Dorsolateral prefrontal cortex (tissue), 120 donors: ENCODE measurements at regions of chr12 and their contacts with region 1.

Region 1: DNA sequence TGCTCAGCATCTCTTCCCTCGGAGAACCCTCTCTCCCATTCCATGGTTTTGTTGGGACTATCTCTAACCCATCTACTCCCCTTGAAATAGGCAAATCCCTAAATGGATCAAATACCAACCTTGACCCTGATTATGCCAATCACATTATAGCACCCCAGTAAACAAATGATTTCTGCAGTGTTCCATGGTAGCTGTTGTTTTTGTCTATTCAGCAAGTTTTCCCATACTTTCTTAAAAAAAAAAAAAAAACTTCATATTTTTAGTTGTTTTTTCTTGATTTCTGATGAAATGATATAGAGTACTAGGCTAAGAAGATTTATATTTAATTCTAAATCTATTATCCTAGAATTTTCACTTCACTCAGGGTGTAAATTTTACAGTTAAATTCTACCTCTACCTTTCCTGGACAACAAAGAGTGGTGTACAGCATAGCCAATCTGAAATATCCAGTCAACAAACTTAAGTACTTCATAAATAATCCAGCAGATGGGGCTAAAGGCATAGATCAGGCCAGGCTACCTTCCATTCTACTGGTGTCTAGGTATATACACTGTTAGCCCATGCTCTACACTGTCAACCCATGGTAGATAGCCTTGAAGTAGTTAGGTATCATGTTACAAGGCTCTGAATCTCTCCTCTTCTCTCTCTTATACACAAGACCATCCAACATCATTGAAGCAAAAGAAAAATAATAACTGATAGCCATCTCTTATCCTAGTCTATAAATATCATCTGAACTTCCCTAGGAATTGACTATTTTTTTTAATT is 82.2 kb downstream of the PLEKHG7 start:
- DNase-seq: peak in 1 of 10 donors; percentile 22
- H3K4me3 ChIP-seq: no peak overlapping the region
- H3K27ac ChIP-seq: peak overlapping the region in 2 of 59 donors; percentile 6 to 7
- H3K27me3 ChIP-seq: no peaks in the 10 kb centered on the region
- CTCF ChIP-seq: peak in 55 of 56 donors; percentile 30 to 78 (median 56)

Region 2: GRCh38 chr12:92356425-92356824 is 428.6 kb before region 1 on chr12:
- intact Hi-C with region 1: no loop called
- DNase-seq: no peak
- H3K4me3 ChIP-seq: no peak overlapping the region
- H3K27ac ChIP-seq: no peak overlapping the region
- H3K27me3 ChIP-seq: no peaks in the 10 kb centered on the region
- CTCF ChIP-seq: no peak

Region 3: GRCh38 chr12:92729773-92730305 is 55.1 kb before region 1 on chr12:
- intact Hi-C with region 1: no loop called
- DNase-seq: no peak
- H3K4me3 ChIP-seq: no peak overlapping the region
- H3K27ac ChIP-seq: no peak overlapping the region
- H3K27me3 ChIP-seq: no peaks in the 10 kb centered on the region
- CTCF ChIP-seq: no peak

Region 4: DNA sequence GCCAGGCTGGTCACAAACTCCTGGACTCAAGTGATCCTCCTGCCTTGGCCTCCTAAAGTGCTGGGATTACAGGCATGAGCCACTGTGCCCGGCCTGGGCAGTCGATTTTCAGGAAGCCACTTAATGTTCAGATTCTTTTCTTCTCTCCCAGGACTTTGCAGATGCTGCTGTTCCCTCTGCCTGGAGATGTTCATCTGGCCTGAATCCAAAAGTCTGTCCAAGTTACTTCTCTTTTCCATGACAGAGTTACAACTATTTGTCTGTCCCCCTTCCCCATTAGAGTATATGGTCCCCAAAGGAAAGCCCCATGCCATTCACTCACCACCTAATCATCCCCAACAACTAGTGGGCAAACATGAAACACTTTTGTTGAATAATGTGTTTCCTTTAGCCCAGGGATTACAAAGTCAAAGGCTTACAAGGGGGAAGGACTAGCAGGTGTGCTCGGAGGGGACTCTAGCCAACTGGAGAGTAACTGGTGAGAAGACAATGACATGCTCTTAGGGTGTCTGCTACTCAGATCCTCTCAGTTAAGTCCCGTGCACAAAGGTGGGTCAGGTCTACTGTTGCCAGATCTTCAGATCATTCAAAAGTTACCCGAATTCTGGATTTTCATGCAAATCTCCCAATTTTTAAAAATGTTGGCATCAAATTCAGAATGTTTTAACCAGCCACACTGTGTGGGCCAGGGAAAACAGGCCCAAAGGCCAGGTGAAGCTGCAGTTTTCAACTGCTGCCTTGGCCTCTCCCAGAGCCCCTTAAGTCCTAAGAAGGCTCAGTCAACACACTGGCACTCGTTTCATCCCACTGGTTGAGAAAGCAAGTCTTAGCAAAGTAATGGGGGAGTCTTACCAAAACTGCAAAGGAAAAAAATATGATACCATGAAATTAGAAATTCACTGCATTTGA is 622.3 kb after region 1 on chr12:
- intact Hi-C with region 1: loop called in 1 of 2 experiments (anchors 5 kb)
- DNase-seq: no peak
- H3K4me3 ChIP-seq: no peak overlapping the region
- H3K27ac ChIP-seq: no peak overlapping the region
- H3K27me3 ChIP-seq: no peaks in the 10 kb centered on the region
- CTCF ChIP-seq: no peak